Esophagus muscularis mucosa (tissue), 4 donors: ENCODE measurements at regions of chr22 and their contacts with region 1.

Region 1: DNA sequence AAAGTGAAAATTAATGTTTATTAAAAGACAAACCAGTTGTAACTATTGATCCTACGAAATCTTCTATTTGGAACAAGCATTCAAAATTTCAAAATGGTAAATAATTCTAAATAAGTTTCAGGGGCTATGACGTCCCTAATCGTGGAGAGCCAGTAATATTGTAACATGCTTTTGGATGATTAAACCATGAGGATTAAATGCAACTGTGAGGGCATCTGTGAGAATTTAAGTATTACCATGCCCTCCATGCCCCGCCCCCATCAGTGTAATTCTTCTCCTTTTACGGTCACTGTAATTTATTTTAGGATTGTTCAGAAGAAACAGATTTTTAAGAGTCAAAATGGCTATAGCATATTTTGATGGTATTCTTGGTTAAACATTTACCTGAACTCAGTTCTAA is 133.2 kb downstream of the APOL5 start:
- DNase-seq: no peak
- H3K4me3 ChIP-seq: no peak overlapping the region
- H3K27ac ChIP-seq: peak overlapping the region; percentile 38 to 65 (median 56)
- H3K4me1 ChIP-seq: peaks cover 23 to 55% (median 43%) of the 10 kb centered on the region in 4 donors
- H3K27me3 ChIP-seq: no peaks in the 10 kb centered on the region
- CTCF ChIP-seq: no peak
- EP300 ChIP-seq: no peak
- POLR2A ChIP-seq: no peak

Region 2: DNA sequence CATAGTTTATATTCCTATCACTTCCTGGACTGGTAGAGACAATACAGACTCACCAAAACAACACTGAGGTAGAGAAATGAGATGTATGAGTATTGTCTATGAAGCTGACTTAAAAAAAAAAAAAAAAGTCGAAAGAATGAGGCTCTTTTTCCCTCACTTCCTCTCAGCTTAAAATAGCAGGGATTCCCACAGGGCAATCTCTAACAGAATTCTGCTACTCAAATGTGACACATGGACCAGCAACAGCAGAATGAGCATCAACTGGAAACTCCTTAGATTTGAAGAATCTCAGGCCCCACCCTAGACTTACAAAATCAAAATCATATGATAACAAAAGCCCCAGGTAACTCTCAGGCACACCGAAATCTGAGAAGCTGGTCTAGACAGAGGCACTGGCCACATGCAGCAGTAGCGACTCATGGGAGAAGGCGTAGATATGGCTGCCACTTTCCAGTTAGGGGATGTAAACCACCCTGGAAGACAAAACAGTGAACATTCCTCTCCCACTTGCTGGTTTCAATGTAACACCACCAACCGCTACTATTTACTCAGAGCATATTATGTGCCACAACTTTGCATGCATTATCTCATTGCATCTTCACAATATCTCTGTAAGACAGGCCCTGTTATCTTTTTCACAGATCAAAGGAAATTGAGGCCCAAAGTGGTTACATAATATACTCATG is 49.8 kb after region 1 on chr22:
- intact Hi-C with region 1: loop called (anchors 10 kb)
- DNase-seq: no peak
- H3K4me3 ChIP-seq: no peak overlapping the region
- H3K27ac ChIP-seq: peak overlapping the region; percentile 45 to 57 (median 54)
- H3K4me1 ChIP-seq: peaks cover 18 to 73% (median 52%) of the 10 kb centered on the region in 4 donors
- H3K27me3 ChIP-seq: no peaks in the 10 kb centered on the region
- CTCF ChIP-seq: no peak
- EP300 ChIP-seq: no peak
- POLR2A ChIP-seq: no peak

Region 3: GRCh38 chr22:36010882-36011281 is 160.1 kb after region 1 on chr22:
- intact Hi-C with region 1: no loop called
- DNase-seq: no peak
- H3K4me3 ChIP-seq: no peak overlapping the region
- H3K27ac ChIP-seq: peak overlapping the region; percentile 47 to 77 (median 53)
- H3K4me1 ChIP-seq: peaks cover 35 to 96% (median 93%) of the 10 kb centered on the region in 4 donors
- H3K27me3 ChIP-seq: no peaks in the 10 kb centered on the region
- CTCF ChIP-seq: no peak
- EP300 ChIP-seq: no peak
- POLR2A ChIP-seq: no peak